A673 (cell line): ENCODE measurements at regions of chr1 and their contacts with region 1.

Region 1: GRCh38 chr1:209720326-209720725 is 15.7 kb downstream of the HSD11B1 start:
- DNase-seq: no peak
- H3K4me3 ChIP-seq: no peak overlapping the region
- H3K27ac ChIP-seq: no peak overlapping the region
- H3K4me1 ChIP-seq: peaks cover 4% of the 10 kb centered on the region
- H3K27me3 ChIP-seq: no peaks in the 10 kb centered on the region
- CTCF ChIP-seq: no peak

Region 2: DNA sequence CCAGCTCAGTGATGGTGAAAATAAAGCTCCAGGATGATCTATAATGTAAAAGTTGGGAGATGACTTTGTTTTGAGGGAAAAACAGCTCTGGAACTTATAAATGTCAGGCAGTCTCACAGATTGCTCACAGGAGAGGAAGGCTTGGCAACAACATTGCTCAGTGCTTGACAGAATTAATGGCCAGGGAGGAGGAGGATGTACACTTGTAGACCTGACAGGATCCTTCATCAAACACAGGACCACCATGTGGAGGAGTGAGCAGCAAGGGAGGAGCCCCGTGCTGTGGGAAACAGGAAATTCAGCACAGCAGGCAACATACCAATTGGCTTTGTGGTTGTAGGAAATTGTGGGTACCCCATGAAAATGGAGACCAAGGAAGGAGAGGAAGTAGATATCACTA is 428.6 kb before region 1 on chr1:
- CTCF ChIA-PET with region 1: no interaction called
- POLR2A ChIA-PET with region 1: no interaction called
- intact Hi-C with region 1: no loop called
- DNase-seq: peak; percentile 15
- H3K4me3 ChIP-seq: no peak overlapping the region
- H3K27ac ChIP-seq: no peak overlapping the region
- H3K4me1 ChIP-seq: no peaks in the 10 kb centered on the region
- H3K27me3 ChIP-seq: peaks cover 19% of the 10 kb centered on the region
- CTCF ChIP-seq: no peak

Region 3: DNA sequence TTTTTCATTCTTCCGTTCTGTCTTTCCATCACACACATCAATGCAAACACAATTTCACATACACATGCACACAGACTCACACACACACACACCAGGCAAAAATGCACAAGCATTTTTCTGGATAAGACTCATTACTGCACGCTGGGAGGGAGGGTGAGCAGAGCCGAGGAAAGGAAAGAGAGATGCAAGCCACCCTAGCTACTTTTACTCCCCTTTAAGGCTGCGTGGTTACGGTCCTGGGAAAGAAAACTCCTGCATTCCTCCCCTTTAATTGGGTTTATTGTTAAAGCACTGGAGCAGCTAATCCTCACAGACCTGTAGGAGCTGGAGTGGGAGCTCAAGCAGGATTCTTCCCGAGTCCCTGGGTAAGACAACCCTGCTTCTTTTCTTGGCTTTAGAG is 136.9 kb before region 1 on chr1 and contains the start of gene CAMK1G:
- CTCF ChIA-PET with region 1: interaction called, 10 read pairs
- POLR2A ChIA-PET with region 1: no interaction called
- intact Hi-C with region 1: no loop called
- DNase-seq: peak; percentile 90
- H3K4me3 ChIP-seq: peak within 1 kb of the TSS; percentile 64
- H3K27ac ChIP-seq: peak within 1 kb of the TSS; percentile 27
- H3K4me1 ChIP-seq: peaks cover 32% of the 10 kb centered on the region
- H3K27me3 ChIP-seq: no peaks in the 10 kb centered on the region
- CTCF ChIP-seq: no peak
- total RNA-seq, gene CAMK1G: 18.6 and 21.2 TPM in 2 replicates